ENCODE measurements at regions of chrX and their contacts with region 1.

Region 1: DNA sequence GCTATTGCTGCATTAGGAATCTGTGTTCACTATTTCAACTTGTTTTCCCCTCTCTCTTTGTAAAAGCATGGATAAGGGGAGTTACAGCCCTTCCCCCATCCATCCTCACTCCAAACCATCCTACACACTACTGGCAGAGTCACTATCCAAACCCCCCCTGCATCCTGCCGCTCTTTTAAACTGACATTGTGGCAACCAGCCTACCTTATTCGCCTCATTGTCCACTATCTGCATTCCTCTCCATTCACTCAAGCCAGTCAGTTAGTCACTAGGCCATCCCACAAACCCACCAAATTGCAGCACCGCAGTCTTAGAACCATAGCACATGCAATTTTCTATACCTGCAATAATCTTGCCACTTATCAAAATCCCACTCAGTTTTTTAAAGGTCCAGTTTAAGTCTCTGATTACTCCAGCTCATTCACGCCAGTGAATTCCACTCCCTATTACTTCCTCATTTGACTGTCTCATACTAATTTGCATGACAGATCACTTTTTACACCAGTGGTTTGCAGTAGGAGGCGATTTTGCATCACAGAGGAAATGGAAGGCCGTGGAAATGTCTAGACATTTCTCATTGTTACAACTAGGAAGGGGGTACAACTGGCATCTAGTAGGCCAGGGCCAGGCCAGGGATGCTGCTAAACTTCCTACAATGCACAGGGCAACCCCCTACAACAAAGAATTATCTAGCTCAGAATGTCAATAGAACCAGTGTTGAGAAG is 181.8 kb downstream of the HS6ST2 start:
- DNase-seq: no peak
- H3K4me3 Mint-ChIP-seq: no peak overlapping the region
- H3K27ac Mint-ChIP-seq: no peak overlapping the region
- H3K4me1 Mint-ChIP-seq: peaks cover 16% of the 10 kb centered on the region
- H3K27me3 Mint-ChIP-seq: no peaks in the 10 kb centered on the region

Region 2: DNA sequence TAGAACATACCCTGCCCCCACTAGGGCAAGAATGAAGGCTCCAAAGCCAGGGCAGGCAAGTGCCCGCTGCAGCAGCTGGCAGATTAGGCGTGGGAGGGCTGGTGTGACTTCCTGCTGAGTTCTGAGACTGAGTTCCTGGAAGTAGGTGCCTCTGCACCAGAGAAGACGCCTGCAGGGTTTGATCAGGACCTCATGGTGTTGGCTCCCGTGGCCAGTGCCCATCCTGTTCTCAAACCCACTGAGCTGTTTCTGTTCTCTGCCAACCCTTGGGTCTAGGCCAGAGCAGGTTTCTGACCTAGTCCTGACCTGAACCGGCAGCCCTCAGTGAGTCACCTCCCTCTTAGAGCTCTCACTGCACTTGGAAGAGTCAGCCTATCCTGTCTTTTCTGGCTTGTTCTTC is 38.9 kb before region 1 on chrX:
- CTCF ChIA-PET with region 1: no interaction called
- intact Hi-C with region 1: loop called (anchors 2 kb)
- DNase-seq: peak; percentile 72
- H3K4me3 Mint-ChIP-seq: no peak overlapping the region
- H3K27ac Mint-ChIP-seq: no peak overlapping the region
- H3K4me1 Mint-ChIP-seq: peaks cover 12% of the 10 kb centered on the region
- H3K27me3 Mint-ChIP-seq: no peaks in the 10 kb centered on the region

Region 3: GRCh38 chrX:132940727-132941327 is 164.2 kb after region 1 on chrX:
- CTCF ChIA-PET with region 1: no interaction called
- intact Hi-C with region 1: no loop called
- DNase-seq: no peak
- H3K4me3 Mint-ChIP-seq: no peak overlapping the region
- H3K27ac Mint-ChIP-seq: no peak overlapping the region
- H3K4me1 Mint-ChIP-seq: no peaks in the 10 kb centered on the region
- H3K27me3 Mint-ChIP-seq: peaks cover 3% of the 10 kb centered on the region

Region 4: DNA sequence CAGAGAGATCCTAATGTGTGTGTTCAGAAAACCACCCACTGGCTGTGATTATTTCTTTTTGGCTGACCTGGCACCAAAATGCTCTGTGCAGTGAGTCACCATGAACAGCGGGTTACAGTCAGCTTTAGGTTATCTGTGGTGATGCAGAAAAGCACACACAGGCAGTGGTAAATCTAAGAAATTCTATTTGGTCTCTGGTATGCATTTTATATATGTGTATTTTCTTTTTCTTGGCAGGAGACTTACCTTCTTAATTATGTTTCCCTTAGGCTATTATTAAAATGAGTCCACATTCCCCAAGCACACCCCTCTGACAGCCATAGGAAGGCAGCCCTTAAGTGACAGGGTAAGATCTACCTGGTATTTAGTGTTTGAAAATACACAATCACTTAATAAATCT is 520.6 kb after region 1 on chrX:
- CTCF ChIA-PET with region 1: no interaction called
- intact Hi-C with region 1: no loop called
- DNase-seq: no peak
- H3K4me3 Mint-ChIP-seq: no peak overlapping the region
- H3K27ac Mint-ChIP-seq: no peak overlapping the region
- H3K4me1 Mint-ChIP-seq: no peaks in the 10 kb centered on the region
- H3K27me3 Mint-ChIP-seq: no peaks in the 10 kb centered on the region

Measured in activated naive CD4-positive, alpha-beta T cell treated with anti-CD3 and anti-CD28 coated beads for 36 hours (primary cell).